ENCODE measurements at regions of chr9 and their contacts with region 1.

Region 1: GRCh38 chr9:95510709-95511615 is 5.8 kb downstream of the PTCH1 start:
- DNase-seq: peak; percentile 96
- H3K4me3 Mint-ChIP-seq: peak overlapping the region; percentile 86
- H3K27ac Mint-ChIP-seq: peak overlapping the region; percentile 86
- H3K4me1 Mint-ChIP-seq: peaks cover 29% of the 10 kb centered on the region
- H3K27me3 Mint-ChIP-seq: peaks cover 62% of the 10 kb centered on the region

Region 2: GRCh38 chr9:95004411-95005277 is 506.3 kb before region 1 on chr9:
- intact Hi-C with region 1: no loop called
- DNase-seq: peak; percentile 83
- H3K4me3 Mint-ChIP-seq: peak overlapping the region; percentile 78
- H3K27ac Mint-ChIP-seq: peak overlapping the region; percentile 44
- H3K4me1 Mint-ChIP-seq: peaks cover 31% of the 10 kb centered on the region
- H3K27me3 Mint-ChIP-seq: peaks cover 28% of the 10 kb centered on the region

Region 3: GRCh38 chr9:95317119-95317892 is 193.7 kb before region 1 on chr9 and contains the start of gene FANCC:
- intact Hi-C with region 1: loop called (anchors 2 kb)
- DNase-seq: peak; percentile 96
- H3K4me3 Mint-ChIP-seq: peak within 1 kb of the TSS; percentile 91
- H3K27ac Mint-ChIP-seq: peak within 1 kb of the TSS; percentile 96
- H3K4me1 Mint-ChIP-seq: peaks cover 16% of the 10 kb centered on the region
- H3K27me3 Mint-ChIP-seq: peaks cover 23% of the 10 kb centered on the region
- total RNA-seq, gene FANCC: 16.7 and 18.0 TPM in 2 replicates

Region 4: DNA sequence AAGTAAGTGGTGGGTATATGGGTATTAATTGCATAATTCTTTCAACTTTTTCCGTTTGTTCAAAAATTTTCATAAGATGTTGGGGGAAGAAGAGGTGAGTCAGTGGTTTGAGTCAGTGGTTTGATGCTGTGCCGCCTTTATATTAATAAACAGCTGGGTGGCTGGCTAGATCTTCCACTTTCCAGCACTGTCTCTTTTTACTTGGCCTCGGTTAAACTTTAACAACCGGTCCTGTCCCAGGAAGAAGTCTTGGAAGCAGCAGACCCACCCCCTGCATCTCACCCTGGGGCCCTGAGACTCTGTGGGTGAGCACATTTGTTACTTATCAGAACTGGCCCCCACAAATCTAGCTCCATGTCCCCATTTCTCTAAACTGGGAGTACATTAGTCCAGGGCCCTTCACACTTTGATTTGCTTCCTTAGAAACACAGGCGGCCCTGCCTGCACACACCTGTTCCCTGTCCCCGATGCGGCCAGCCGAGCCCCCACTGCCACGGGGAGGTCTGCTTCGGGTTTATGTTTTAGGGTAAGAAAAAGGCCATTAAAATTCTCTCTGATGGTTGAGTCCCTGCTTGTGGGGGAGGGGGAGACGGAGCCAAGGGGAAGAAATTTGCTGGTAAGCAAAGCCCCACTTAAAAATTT is 84.9 kb before region 1 on chr9:
- intact Hi-C with region 1: loop called (anchors 10 kb)
- DNase-seq: no peak
- H3K4me3 Mint-ChIP-seq: peak overlapping the region; percentile 74
- H3K27ac Mint-ChIP-seq: peak overlapping the region; percentile 34
- H3K4me1 Mint-ChIP-seq: peaks cover 9% of the 10 kb centered on the region
- H3K27me3 Mint-ChIP-seq: peaks cover 11% of the 10 kb centered on the region

Region 5: GRCh38 chr9:95462249-95463147 is 48.5 kb before region 1 on chr9:
- intact Hi-C with region 1: loop called (anchors 1 kb)
- DNase-seq: peak; percentile 94
- H3K4me3 Mint-ChIP-seq: peak overlapping the region; percentile 78
- H3K27ac Mint-ChIP-seq: peak overlapping the region; percentile 70
- H3K4me1 Mint-ChIP-seq: peaks cover 23% of the 10 kb centered on the region
- H3K27me3 Mint-ChIP-seq: peaks cover 66% of the 10 kb centered on the region

Region 6: DNA sequence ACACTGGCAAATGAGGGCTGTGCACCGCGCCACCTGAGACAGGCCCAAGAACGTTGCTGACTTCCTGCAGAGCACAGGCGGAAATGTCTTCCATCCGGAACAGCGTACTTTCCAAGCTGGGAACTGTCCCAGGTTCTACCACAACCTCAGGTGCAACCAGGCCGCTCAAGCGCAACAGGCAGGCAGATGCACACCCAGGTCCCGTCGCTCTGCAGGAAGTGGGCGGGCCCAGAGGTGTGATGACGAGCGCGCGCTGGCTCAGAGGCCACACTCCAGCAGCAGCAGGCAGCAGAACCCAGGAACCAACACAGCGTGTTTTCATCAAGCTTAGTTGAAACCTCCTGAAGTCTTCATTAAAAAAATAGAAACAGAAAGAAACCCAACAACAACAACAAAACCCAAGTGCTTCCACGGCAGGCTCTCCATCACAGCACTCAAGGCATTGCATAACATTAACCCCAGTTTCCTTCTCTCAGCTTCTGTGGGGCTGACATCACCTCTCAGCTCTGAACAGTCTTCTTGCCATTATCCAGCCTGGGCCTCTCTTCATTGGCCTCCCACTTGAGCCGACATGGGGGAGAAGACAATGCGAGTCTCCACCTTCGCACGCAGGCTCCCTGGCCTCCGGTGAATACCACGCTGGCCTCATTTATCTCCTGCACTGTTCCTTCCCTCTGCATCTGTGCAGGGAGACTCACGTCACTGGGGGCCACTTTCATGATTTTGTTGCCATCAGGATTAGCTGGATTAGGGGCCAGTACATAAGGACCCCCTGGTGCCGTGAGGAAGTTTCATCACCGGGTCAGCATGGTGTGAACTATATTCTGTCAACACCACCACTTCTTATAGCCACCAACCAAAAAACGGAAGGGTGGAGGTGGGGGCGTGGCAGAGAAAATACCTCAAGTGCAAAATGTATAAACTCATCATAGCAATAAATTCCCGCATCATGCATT is 16.3 kb before region 1 on chr9:
- intact Hi-C with region 1: loop called (anchors 1 kb)
- DNase-seq: peak; percentile 96
- H3K4me3 Mint-ChIP-seq: peak overlapping the region; percentile 77
- H3K27ac Mint-ChIP-seq: peak overlapping the region; percentile 83
- H3K4me1 Mint-ChIP-seq: peaks cover 32% of the 10 kb centered on the region
- H3K27me3 Mint-ChIP-seq: peaks cover 21% of the 10 kb centered on the region

Region 7: DNA sequence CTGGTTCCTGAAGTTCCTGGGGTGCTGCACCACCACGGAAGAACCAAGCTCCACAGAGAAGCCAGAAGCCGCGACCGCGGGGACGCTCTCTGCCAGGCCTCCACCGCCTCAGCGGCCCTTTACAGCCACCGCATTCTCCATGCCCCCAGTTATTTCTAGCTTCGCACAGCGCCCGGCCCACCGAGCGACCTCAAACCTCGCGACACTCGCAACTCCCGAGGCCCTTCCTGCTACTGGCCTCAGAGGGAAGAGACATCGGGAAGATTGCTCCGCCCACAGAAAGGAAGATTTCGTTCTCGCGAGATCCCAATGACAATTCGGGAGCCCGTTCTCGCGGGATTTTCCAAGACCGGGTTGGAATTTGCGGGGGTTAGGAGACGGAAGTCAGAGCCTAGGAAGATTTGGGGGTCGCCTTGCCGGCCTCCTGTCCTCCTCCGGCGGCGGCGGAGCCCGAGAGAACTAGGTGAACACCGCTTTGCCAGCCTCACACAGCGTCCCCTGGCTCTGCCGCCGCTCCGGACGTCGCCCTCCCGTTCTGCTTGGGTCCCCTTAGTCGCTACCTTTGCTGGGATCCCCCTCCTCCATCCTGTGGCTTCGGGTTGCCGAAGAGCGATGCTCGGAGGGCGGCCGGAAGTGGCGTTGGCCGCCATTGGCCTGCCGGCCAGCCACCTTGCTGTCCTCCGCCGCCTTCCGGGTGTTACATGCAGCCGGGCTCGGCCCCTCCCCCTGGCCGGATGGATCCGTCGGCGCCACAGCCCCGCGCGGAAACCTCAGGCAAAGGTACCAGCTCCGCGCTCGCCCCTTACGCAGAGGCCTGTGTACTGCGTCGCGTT is 364.6 kb after region 1 on chr9 and contains the start of gene ERCC6L2:
- intact Hi-C with region 1: loop called (anchors 1 kb)
- DNase-seq: peak; percentile 98
- H3K4me3 Mint-ChIP-seq: no peak within 1 kb of the TSS
- H3K27ac Mint-ChIP-seq: no peak within 1 kb of the TSS
- H3K4me1 Mint-ChIP-seq: peaks cover 37% of the 10 kb centered on the region
- H3K27me3 Mint-ChIP-seq: no peaks in the 10 kb centered on the region
- total RNA-seq, gene ERCC6L2: 32.1 and 35.7 TPM in 2 replicates

Region 8: GRCh38 chr9:96020792-96021550 is 510.0 kb after region 1 on chr9:
- intact Hi-C with region 1: loop called (anchors 5 kb)
- DNase-seq: peak; percentile 91
- H3K4me3 Mint-ChIP-seq: peak overlapping the region; percentile 84
- H3K27ac Mint-ChIP-seq: peak overlapping the region; percentile 96
- H3K4me1 Mint-ChIP-seq: peaks cover 72% of the 10 kb centered on the region
- H3K27me3 Mint-ChIP-seq: peaks cover 12% of the 10 kb centered on the region

Measured in activated CD4-positive, alpha-beta T cell treated with anti-CD3 and anti-CD28 coated beads, Interleukin-2, amount 10 ng/mL, durations not matched to agents 24 days and 14 days (primary cell).